ENCODE measurements at regions of chr1 and their contacts with region 1.

Region 1: DNA sequence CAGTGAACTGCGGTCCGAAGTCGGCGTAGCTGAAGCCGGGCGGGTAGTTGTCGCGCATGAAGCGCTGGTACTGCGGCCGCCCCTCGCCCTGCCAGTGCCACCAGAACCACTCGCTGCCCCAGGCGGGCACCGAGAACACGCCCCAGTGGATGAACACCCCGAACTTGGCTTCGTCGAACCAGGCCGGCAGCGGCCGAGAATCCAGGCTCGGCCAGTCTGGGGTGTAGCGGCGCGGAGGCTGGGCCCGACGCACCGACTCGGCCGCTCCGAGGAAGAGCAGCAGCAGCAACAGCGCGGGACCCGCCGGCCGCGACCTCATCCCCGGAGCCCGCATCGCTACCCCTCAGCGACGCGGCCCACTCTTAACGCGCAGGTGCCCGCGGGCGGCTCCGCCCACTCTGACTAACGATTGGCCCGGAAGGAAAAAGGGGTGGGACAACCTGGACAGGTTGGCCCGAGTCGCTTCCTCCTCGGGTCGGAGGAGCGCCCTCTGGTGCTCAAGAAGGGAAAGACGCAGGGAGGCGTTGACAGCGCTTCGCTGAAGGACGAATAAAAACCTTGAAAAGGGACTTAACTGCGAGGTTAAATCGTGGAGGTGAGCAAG is at the start of gene FUCA1:
- DNase-seq: peak; percentile 89 to 94
- ATAC-seq: peak; percentile 96 to 99 (median 98)
- H3K4me3 ChIP-seq: peak within 1 kb of the TSS; percentile 93
- H3K27ac ChIP-seq: peak within 1 kb of the TSS; percentile 80
- H3K4me1 ChIP-seq: peaks cover 10% of the 10 kb centered on the region
- H3K27me3 ChIP-seq: no peaks in the 10 kb centered on the region
- CTCF ChIP-seq: peak; percentile 97
- total RNA-seq, gene FUCA1: 8.2 to 12.5 (median 8.8) TPM

Region 2: DNA sequence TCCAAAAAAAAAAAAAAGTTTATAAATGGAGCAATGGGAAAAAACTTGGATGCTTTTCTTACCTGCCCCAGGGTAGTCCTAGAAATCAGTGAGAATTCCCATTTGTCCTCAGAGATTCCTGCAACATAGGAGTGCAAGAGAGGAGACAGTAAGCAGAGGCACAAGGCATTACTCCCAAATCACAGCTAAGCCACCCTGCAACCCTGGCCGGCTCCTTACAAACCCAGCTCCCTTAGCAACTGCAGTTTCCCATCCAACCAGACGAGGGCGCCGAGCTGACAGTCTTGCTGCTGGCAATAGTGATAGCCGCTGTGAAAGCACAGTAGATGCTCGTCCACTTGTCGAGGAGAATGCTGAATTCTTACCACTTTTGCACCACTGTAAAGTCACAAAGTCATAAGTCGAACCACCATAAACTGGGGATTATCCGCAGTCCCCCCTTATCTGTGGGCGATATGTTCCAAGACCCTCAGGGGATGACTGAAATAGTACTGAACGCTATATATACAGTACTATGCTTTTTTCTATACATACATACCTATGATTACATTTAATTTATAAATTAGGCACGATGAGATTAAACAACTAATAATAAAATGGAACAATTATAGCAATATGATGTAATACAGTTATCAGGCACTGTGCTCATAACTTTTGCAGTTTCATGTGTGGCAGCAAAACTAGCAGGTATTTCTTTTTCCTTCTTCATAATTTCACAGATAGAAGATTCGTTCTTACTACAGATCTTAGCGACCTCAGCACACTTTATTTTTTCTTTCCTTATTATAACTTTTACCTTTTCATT is 95.8 kb before region 1 on chr1:
- intact Hi-C with region 1: loop called in 1 of 2 experiments (anchors 5 kb)
- DNase-seq: peak; percentile 86 to 92
- ATAC-seq: peak; percentile 81 to 94 (median 88)
- H3K4me3 ChIP-seq: no peak overlapping the region
- H3K27ac ChIP-seq: no peak overlapping the region
- H3K4me1 ChIP-seq: peaks cover 16% of the 10 kb centered on the region
- H3K27me3 ChIP-seq: no peaks in the 10 kb centered on the region
- CTCF ChIP-seq: peak; percentile 92

Region 3: DNA sequence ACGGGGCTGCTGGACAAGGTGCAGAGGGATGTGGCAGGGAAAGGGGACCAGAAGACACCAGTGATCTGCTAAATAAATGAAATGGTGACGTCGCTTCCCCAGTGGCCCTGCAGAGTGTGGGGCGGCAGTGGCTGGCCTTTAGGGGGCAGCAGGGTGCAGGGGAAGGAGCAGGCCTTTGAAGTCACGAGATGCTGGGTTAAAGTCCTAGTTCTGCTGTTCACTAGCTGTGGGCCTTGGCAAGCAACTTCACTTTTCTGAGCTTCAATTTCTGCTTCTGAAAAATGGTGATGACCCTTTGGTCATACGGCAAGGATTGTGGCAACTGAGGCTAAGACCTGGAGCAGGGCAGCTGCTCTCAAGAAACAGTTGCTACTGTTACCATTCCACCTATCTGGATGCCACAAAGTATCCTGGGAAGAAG is 58.3 kb before region 1 on chr1:
- intact Hi-C with region 1: loop called (anchors 2 to 5 kb)
- DNase-seq: peak; percentile 76 to 87
- ATAC-seq: peak; percentile 88 to 97 (median 90)
- H3K4me3 ChIP-seq: no peak overlapping the region
- H3K27ac ChIP-seq: no peak overlapping the region
- H3K4me1 ChIP-seq: no peaks in the 10 kb centered on the region
- H3K27me3 ChIP-seq: no peaks in the 10 kb centered on the region
- CTCF ChIP-seq: peak; percentile 78

Region 4: DNA sequence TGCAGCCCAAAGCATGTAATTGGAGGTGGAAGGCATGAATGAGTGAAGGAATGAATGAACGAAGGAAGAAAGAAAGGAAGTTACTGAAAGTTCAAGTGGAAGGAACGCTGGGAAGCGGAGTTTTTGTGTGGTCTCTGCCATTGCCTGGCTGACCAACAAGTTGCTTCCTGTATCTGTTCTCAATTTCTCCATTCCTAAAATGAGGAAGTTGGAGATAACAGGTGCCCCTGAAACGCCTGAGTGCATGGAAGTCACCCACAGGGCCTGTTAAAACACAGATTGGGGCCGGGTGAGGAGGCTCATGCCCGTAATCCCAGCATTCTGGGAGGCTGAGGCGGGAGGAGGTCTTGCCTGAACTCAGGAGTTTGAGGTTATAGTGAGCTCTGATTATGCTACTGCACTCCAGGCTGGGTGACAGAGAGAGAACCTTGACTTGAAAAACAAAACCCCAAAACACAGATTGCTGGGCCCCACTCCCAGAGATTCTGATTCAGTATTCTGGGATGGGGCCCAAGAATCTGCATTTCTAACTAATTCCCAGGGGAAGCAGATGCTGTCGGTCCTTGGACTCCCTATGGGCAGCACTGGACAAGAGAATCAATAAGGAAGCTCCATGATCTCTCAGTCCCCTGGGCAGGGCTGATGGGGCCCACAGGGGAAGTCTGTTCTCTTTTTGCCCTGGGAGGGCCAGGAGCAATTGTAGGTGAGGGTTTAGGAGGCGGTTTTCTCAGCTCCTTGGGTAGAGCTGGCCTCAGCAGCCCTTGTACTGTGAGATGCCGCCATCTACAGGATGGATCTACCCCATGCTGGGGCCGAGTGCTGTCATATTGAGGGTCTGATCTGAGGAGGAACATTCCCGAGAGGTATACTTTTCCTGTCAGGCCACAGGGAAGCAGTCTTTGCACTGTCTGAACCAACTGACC is 48.4 kb after region 1 on chr1:
- intact Hi-C with region 1: loop called in 1 of 2 experiments (anchors 5 kb)
- DNase-seq: no peak
- ATAC-seq: peak; percentile 56 to 78 (median 68)
- H3K4me3 ChIP-seq: no peak overlapping the region
- H3K27ac ChIP-seq: no peak overlapping the region
- H3K4me1 ChIP-seq: peaks cover 7% of the 10 kb centered on the region
- H3K27me3 ChIP-seq: no peaks in the 10 kb centered on the region
- CTCF ChIP-seq: peak; percentile 55

Region 5: GRCh38 chr1:24003331-24003972 is 135.4 kb after region 1 on chr1:
- intact Hi-C with region 1: no loop called
- DNase-seq: no peak
- ATAC-seq: peak; percentile 87 to 93 (median 88)
- H3K4me3 ChIP-seq: no peak overlapping the region
- H3K27ac ChIP-seq: peak overlapping the region; percentile 62
- H3K4me1 ChIP-seq: peaks cover 24% of the 10 kb centered on the region
- H3K27me3 ChIP-seq: no peaks in the 10 kb centered on the region
- CTCF ChIP-seq: peak; percentile 5